GM10248 (cell line): ENCODE measurements at regions of chr2 and their contacts with region 1.

Region 1: DNA sequence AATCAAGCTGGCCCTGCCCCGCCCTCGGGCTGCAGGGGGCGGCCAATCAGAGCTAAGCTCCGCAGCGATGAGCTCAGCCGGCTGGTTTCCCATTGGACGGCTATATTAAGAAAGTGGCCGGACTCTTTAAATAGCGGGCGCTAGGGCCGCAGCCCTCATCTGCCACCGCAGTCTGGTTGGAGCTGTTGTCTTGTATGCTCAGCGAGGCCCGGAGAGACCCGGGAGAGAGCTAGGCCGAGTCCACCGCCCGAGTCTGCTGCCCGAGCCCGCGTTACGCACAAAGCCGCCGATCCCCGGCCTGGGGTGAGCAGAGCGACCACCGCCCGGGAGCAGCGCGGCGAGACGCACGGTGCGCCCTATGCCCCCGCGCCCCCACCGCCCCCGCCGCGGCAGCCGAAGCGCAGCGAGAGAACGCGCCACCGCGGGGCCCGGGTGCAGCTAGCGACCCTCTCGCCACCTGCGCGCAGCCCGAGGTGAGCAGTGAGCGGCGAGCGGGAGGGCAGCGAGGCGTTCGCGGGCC is at the start of gene RHOB:
- DNase-seq: peak; percentile 100
- CTCF ChIP-seq: no peak

Region 2: DNA sequence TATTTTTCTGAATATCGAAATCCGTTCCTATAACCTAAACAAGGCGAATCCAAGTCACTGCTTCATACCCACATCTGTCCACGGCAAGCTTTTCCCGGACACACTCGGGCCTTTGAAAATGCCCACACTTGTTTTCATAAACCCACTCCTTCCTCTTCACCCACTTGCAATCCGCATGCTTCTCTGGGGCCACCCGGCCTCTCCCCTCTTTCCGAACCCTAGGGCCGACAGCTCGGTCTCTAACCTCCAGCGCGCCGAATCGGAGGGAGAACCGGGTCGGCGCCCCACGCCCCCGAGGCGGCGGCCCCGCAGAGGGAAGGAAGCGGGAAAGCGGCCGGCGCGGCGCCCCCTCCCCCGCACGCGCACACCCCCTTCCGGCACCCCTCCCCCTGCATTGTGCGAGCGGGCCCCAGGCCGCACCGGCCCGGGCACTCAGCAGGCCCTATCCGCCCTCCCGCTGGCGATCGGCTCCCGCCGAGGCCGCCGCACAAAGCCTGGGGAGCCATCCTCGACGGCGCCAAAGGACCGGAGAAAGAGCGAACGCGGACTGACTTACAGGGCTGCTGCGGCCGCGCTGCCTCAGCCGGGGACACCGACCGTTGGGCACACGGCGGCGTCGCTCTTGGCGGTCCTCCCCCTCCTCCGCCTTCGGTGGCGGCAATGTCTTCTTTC is 96.8 kb before region 1 on chr2:
- CTCF ChIA-PET with region 1: no interaction called
- POLR2A ChIA-PET with region 1: interaction called, 10 read pairs
- DNase-seq: peak; percentile 57
- CTCF ChIP-seq: no peak

Region 3: DNA sequence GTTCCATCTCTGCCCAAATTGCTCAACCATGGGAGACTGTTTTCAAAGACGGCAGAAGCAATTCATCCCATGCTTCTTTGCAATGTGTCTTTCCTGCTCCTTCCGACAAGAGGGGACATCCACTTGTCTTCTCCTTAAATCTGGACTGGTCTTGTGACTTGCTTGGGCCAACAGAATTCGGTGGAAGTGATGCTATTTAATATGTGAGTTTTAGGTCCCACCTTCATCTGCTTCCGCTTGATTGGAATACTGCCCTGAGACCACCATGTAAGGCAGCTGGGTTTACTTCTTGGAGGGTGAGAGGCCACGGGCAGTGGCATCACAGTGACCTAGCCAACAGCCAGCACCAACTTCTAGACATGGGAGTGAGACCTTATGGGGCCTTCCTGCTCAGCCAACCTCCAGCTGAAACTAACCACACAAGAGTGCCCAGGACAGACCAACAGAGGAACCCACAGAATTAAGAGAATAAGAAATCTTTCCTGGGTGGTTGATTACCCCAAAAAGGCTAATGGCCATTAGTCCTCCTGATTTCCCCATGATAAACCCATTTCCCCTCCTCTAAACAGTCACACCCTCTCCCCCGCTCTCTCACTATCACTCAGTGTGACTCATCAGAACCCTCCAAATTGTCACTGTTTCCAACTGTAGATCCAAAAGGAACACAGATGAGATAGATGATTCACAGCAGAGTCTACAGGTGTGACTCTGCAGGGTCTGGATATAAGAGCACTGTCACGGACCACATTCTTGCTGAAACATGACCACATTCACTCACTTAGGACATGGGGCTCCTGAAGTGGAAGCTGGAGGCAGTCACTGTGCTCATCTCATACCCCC is 16.3 kb before region 1 on chr2:
- CTCF ChIA-PET with region 1: interaction called, 28 read pairs
- POLR2A ChIA-PET with region 1: interaction called, 91 read pairs
- DNase-seq: no peak
- CTCF ChIP-seq: no peak

Region 4: GRCh38 chr2:20490260-20491181 is 43.5 kb after region 1 on chr2:
- CTCF ChIA-PET with region 1: interaction called, 4 read pairs
- POLR2A ChIA-PET with region 1: interaction called, 14 read pairs
- DNase-seq: no peak
- CTCF ChIP-seq: no peak

Region 5: GRCh38 chr2:20525041-20526035 is 78.4 kb after region 1 on chr2:
- CTCF ChIA-PET with region 1: interaction called, 6 read pairs
- POLR2A ChIA-PET with region 1: interaction called, 56 read pairs
- DNase-seq: peak; percentile 81
- CTCF ChIP-seq: peak; percentile 13

Region 6: DNA sequence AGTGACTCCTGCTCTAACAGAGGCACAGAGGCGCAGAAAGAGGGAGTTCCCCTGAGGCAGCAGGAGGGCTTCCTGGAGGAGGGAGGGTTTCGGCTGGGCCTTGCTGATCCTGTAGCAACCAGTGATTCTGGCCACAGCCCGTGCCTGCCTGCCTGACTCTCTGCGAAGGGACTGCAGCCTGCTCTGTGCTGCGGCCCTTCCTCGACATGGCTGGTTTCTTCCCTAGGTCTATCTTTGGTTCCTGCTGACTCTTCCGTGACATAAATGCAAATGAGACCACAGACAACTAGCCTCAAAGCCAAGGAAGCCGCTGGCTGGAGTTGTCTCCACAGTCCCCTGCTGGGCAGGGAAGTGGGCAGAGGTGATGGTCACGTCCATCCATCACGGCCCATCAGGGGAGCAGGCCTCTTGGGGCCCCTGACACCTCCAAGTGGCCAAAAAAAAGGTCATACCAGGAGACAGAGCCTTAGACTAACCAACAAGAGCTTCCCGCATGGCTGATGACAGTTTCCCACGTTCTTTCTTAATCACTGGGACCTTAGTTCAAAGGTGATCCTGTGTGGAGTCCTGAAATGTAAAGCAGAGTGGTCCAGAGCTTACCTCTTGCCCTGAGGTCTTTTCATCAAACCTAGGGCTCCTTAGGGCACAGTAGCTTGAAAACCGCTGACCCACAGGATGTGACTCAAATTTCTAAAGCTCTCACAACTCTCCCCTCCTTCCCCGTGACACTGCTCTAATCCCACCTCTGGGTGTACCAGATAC is 148.6 kb after region 1 on chr2:
- CTCF ChIA-PET with region 1: interaction called, 10 read pairs
- POLR2A ChIA-PET with region 1: interaction called, 52 read pairs
- DNase-seq: peak; percentile 77
- CTCF ChIP-seq: no peak

Region 7: GRCh38 chr2:20642055-20642971 is 195.3 kb after region 1 on chr2:
- CTCF ChIA-PET with region 1: interaction called, 101 read pairs
- POLR2A ChIA-PET with region 1: interaction called, 28 read pairs
- DNase-seq: peak; percentile 91
- CTCF ChIP-seq: peak; percentile 84